ENCODE measurements at regions of chr2 and their contacts with region 1.

Region 1: DNA sequence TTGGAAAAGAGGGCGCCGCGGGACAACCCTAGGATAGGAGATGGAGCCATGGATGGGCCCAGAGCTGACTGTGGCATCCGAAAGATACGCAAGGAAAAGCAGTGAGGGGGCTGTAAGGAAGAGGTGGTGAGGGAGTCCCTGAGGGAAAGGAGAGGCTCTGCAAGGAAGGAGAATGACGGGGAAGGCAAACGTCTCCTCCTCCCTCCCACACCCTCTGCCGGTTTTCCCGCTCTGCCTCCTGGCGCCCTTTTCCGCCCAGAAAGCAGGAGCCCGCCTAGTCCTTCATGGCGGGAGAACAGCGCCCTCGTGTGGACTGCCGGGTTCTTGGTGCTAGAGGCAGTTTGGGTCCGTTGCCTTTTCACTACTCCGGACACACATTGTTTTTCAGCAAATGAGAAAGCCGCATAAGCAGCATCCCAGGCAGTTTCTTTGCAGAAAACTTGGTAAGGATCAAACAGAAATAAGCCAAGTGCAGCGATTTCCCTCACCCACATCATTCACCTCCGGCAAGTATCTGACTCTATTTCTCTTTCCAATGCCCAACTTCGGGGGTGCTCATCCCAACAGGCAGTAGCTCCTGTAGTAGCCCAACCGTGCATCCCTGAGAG is 200.4 kb downstream of the INO80D start:
- DNase-seq: no peak
- H3K4me3 ChIP-seq: no peak overlapping the region
- CTCF ChIP-seq: peak; percentile 91

Region 2: GRCh38 chr2:205766779-205767359 is 118.7 kb before region 1 on chr2:
- CTCF ChIA-PET with region 1: interaction called, 93 read pairs
- POLR2A ChIA-PET with region 1: no interaction called
- DNase-seq: no peak
- H3K4me3 ChIP-seq: no peak overlapping the region
- CTCF ChIP-seq: peak; percentile 81

Region 3: DNA sequence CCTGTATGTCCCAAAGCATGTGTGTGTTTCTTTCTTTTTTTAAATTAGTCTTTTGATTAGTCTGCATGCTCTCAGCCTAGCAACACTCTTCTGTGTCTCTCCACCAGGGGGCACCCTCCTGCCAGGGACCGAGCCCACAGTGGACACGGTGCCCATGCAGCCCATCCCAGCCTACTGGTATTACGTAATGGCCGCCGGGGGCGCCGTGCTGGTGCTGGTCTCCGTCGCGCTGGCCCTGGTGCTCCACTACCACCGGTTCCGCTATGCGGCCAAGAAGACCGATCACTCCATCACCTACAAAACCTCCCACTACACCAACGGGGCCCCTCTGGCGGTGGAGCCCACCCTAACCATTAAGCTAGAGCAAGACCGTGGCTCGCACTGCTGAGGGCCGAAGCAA is 109.5 kb before region 1 on chr2:
- CTCF ChIA-PET with region 1: interaction called, 93 read pairs
- POLR2A ChIA-PET with region 1: no interaction called
- DNase-seq: no peak
- H3K4me3 ChIP-seq: no peak overlapping the region
- CTCF ChIP-seq: peak; percentile 56

Region 4: DNA sequence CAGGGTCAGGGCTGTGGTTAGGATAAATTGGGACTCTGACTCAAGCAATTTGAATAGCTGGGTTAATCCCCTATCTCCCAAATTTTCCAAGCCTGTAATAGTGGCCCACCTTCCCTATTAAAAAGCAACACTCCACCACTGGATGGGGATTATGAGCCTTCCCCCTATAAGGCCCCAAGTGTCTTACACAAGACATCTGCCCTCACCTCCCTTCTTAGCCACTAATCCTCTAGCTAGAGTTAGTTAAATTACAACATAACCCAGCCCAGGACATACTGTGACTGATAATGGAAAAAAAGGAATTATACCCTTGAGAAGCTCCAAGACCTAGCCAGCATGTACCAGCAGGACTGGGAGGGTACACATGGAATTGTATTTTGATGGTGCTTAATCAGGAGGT is 12.9 kb before region 1 on chr2:
- CTCF ChIA-PET with region 1: interaction called, 14 read pairs
- POLR2A ChIA-PET with region 1: no interaction called
- DNase-seq: no peak
- H3K4me3 ChIP-seq: no peak overlapping the region
- CTCF ChIP-seq: no peak

Region 5: GRCh38 chr2:205936446-205936845 is 50.9 kb after region 1 on chr2:
- CTCF ChIA-PET with region 1: no interaction called
- POLR2A ChIA-PET with region 1: no interaction called
- DNase-seq: no peak
- H3K4me3 ChIP-seq: no peak overlapping the region
- CTCF ChIP-seq: no peak

Region 6: GRCh38 chr2:205957452-205958154 is 72.0 kb after region 1 on chr2:
- CTCF ChIA-PET with region 1: no interaction called
- POLR2A ChIA-PET with region 1: no interaction called
- DNase-seq: no peak
- H3K4me3 ChIP-seq: no peak overlapping the region
- CTCF ChIP-seq: no peak

Measured in AG04449 (cell line).